ENCODE measurements at regions of chr1 and their contacts with region 1.

Region 1: DNA sequence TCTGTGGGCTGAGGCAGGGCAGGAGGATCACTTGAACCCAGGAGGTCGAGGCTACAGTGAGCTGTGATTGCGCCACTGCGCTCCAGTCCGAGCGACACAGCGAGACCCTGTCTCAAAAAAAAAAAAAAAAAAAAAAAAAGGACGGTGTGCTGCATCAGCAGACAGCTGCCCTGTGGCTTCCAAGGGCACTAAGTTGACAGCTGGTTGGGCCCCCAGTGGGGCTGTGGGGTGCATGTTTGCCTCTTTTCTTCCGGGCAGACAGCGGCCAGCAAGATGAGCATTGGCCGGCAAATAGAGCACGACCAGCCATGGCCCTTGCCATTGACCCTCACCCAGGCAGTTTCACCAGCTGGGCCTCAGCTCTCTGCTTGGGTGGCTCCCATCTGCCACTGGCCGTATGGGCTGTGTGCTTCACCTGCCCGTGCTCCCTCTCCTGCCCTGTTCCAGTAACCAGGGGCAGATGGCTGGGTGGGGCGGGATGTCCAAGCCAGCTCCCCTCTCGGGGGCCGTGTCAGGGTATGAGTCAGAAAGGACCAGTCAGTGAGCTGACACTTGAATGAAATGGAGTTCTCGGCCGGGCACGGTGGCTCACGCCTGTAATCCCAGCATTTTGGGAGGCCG is 12.3 kb upstream of the SLC25A34 start:
- DNase-seq: no peak
- ATAC-seq: no peak
- H3K4me3 Mint-ChIP-seq: no peak overlapping the region
- H3K27ac Mint-ChIP-seq: no peak overlapping the region
- H3K4me1 Mint-ChIP-seq: no peaks in the 10 kb centered on the region
- H3K27me3 Mint-ChIP-seq: no peaks in the 10 kb centered on the region
- CTCF ChIP-seq: no peak

Region 2: GRCh38 chr1:15543589-15544568 is 179.9 kb before region 1 on chr1:
- CTCF ChIA-PET with region 1: no interaction called
- POLR2A ChIA-PET with region 1: no interaction called
- intact Hi-C with region 1: loop called (anchors 5 kb)
- DNase-seq: no peak
- ATAC-seq: no peak
- H3K4me3 Mint-ChIP-seq: no peak overlapping the region
- H3K27ac Mint-ChIP-seq: no peak overlapping the region
- H3K4me1 Mint-ChIP-seq: no peaks in the 10 kb centered on the region
- H3K27me3 Mint-ChIP-seq: no peaks in the 10 kb centered on the region
- CTCF ChIP-seq: no peak

Measured in activated B cell treated with CpG ODN at 0.5 μM for 24 hours (primary cell).